A549 (cell line): ENCODE measurements at regions of chr1 and their contacts with region 1.

Region 1: GRCh38 chr1:26391450-26391849 is 18.9 kb upstream of the ZNF683 start:
- DNase-seq: peak; percentile 68 to 69
- ATAC-seq: peak; percentile 91 to 92
- H3K4me3 ChIP-seq: no peak overlapping the region
- H3K27ac ChIP-seq: peak overlapping the region in 1 of 2 experiments; percentile 7; a peak in 1 of 6 replicates
- H3K4me1 ChIP-seq: peaks cover 24% of the 10 kb centered on the region
- CTCF ChIP-seq: peak; percentile 82
- EP300 ChIP-seq: no peak
- POLR2A ChIP-seq: no peak
- RAD21 ChIP-seq: peak; percentile 86 to 93

Region 2: DNA sequence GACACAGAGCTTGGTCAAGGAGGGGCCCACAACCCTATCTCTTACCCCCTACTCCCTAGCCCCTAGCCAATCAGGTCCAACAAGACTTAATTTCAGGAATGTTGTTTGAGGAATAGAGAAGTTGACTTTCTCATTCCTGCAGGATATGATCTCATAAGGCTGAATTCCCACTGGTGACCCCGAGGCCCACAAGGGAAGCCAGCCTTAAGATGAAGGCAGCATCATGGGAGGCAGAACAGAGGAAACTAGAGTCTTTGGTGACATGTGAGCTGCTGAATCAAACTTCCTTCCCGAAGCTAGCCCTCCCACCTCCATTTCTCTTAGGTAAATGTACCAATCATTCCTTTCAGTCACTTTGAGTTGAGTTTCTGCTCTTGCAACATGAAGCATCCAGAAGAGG is 288.9 kb before region 1 on chr1:
- CTCF ChIA-PET with region 1: interaction called, 10 read pairs
- POLR2A ChIA-PET with region 1: no interaction called
- DNase-seq: no peak
- ATAC-seq: no peak
- H3K4me3 ChIP-seq: no peak overlapping the region
- H3K27ac ChIP-seq: no peak overlapping the region
- H3K4me1 ChIP-seq: peaks cover 7% of the 10 kb centered on the region; the same call in 2 of the 3 replicates
- CTCF ChIP-seq: no peak
- EP300 ChIP-seq: no peak
- POLR2A ChIP-seq: no peak
- RAD21 ChIP-seq: no peak

Region 3: DNA sequence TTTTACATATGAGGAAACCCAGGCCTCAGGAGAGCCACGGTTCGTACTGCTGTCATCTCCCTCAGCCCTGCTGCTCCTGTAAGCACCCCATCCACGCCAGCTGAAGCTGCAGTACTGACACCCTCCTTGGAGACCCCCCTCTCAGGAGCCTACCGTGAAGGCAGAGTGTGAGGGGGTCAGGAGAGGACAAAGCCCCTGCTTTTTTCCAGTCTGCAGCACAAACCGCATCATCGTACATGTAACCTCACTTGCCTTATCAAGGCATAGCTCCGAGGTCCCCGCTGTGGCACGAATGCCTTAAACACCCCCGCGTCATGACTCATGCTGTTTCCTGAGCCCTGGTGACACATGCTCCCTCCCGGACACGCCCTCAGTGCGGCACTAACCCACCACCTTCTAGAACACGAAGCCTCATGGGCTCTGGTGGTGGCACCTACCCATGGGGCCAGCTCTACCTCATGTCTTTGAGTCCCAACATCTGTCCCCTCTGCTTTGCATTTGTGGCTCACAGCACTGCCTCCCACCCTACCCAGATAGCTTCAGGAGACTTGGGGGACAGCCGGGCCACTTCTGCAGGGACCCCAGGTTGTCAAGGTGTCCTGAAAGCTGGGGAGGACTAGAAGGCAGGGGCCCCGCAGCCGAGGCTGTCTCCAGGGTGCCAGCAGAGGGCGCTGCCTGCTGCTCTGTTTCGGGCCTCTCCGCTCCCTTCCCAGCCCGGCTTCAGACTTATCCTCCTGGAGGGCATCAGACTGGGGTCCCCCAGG is 106.7 kb before region 1 on chr1:
- CTCF ChIA-PET with region 1: interaction called, 34 read pairs
- POLR2A ChIA-PET with region 1: no interaction called
- DNase-seq: peak; percentile 64
- ATAC-seq: peak; percentile 67 to 82
- H3K4me3 ChIP-seq: no peak overlapping the region
- H3K27ac ChIP-seq: peak overlapping the region in 1 of 2 experiments; percentile 64; a peak in 3 of 6 replicates
- H3K4me1 ChIP-seq: peaks cover 23% of the 10 kb centered on the region
- CTCF ChIP-seq: peak; percentile 63
- EP300 ChIP-seq: no peak
- POLR2A ChIP-seq: no peak
- RAD21 ChIP-seq: peak; percentile 69

Region 4: DNA sequence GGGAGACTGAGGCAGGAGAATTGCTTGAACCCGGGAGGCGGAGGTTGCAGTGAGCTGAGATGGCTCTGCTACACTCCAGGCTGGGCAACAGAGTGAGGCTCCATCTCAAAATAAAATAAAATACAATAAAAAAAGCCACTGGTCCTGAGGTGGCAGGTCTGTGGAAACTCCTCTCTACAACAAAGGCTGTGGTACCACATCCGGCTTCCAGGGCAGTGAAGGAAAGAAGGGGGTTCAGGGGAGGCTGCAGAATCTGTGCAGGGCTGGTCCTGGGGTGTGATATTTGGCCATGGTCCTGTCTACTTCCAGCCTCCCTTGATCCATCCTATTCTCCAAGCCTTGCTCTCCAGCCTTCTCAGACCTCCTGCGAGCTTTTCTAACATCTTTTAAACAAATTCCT is 18.2 kb before region 1 on chr1:
- CTCF ChIA-PET with region 1: interaction called, 17 read pairs
- POLR2A ChIA-PET with region 1: no interaction called
- DNase-seq: no peak
- ATAC-seq: no peak
- H3K4me3 ChIP-seq: no peak overlapping the region
- H3K27ac ChIP-seq: no peak overlapping the region
- H3K4me1 ChIP-seq: peaks cover 17% of the 10 kb centered on the region
- CTCF ChIP-seq: no peak
- EP300 ChIP-seq: no peak
- POLR2A ChIP-seq: no peak
- RAD21 ChIP-seq: no peak

Region 5: GRCh38 chr1:26408604-26409003 is 17.2 kb after region 1 on chr1:
- CTCF ChIA-PET with region 1: interaction called, 11 read pairs
- POLR2A ChIA-PET with region 1: no interaction called
- DNase-seq: peak; percentile 44 to 64
- ATAC-seq: peak; percentile 53 to 64; a peak in 4 of 6 replicates
- H3K4me3 ChIP-seq: no peak overlapping the region
- H3K27ac ChIP-seq: no peak overlapping the region
- H3K4me1 ChIP-seq: peaks cover 34% of the 10 kb centered on the region
- CTCF ChIP-seq: no peak
- EP300 ChIP-seq: no peak
- POLR2A ChIP-seq: no peak
- RAD21 ChIP-seq: no peak

Region 6: GRCh38 chr1:26771643-26772321 is 380.3 kb after region 1 on chr1:
- CTCF ChIA-PET with region 1: no interaction called
- POLR2A ChIA-PET with region 1: no interaction called
- DNase-seq: peak; percentile 69 to 87
- ATAC-seq: peak; percentile 71 to 91
- H3K4me3 ChIP-seq: no peak overlapping the region
- H3K27ac ChIP-seq: peak overlapping the region; percentile 3 to 78; a peak in 4 of 6 replicates
- H3K4me1 ChIP-seq: peaks cover 29% of the 10 kb centered on the region
- CTCF ChIP-seq: no peak
- EP300 ChIP-seq: no peak
- POLR2A ChIP-seq: no peak
- RAD21 ChIP-seq: no peak

Region 7: GRCh38 chr1:26864610-26865527 is 473.4 kb after region 1 on chr1:
- CTCF ChIA-PET with region 1: no interaction called
- POLR2A ChIA-PET with region 1: no interaction called
- DNase-seq: peak; percentile 65 to 96
- ATAC-seq: peak; percentile 76 to 89
- H3K4me3 ChIP-seq: peak overlapping the region; percentile 66
- H3K27ac ChIP-seq: peak overlapping the region; percentile 99 to 100
- H3K4me1 ChIP-seq: peaks cover 30% of the 10 kb centered on the region
- CTCF ChIP-seq: no peak
- EP300 ChIP-seq: no peak
- POLR2A ChIP-seq: peak; percentile 98
- RAD21 ChIP-seq: no peak